AG04450 (cell line): ENCODE measurements at regions of chr7 and their contacts with region 1.

Region 1: GRCh38 chr7:27921081-27921836 is 181.3 kb downstream of the TAX1BP1 start:
- DNase-seq: peak; percentile 76
- H3K4me3 ChIP-seq: no peak overlapping the region
- H3K27ac ChIP-seq: no peak overlapping the region
- H3K27me3 ChIP-seq: no peaks in the 10 kb centered on the region
- CTCF ChIP-seq: peak; percentile 60

Region 2: DNA sequence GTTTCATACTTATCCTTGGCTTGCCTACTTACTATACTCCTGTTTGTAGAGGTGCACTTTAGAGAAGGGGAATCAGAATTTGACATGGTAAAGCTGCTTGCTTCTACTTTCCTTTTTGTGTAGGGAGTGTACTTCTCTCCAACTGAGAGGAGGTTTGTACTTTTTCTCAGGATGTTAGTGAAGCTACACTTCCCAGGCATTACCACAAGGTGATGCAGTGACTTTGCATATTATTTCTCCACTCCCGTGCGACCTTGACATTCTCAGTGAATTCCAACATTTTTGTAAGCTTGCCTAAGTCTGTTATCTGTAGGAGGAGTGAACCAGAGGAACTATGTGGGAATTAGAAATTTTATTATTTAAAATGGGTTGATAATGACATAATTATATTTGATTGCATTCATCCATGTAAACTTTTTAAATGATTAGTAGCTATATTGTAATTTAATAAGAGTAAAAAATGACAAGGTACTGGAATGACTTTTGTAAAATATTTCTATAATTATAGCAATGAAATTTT is 176.1 kb before region 1 on chr7:
- CTCF ChIA-PET with region 1: interaction called, 19 read pairs
- POLR2A ChIA-PET with region 1: no interaction called
- DNase-seq: peak; percentile 51
- H3K4me3 ChIP-seq: peak overlapping the region; percentile 21; the same call in 1 of the 2 replicates
- H3K27ac ChIP-seq: peak overlapping the region; percentile 79
- H3K27me3 ChIP-seq: no peaks in the 10 kb centered on the region
- CTCF ChIP-seq: peak; percentile 80

Region 3: GRCh38 chr7:27941522-27941921 is 20.3 kb after region 1 on chr7:
- CTCF ChIA-PET with region 1: no interaction called
- POLR2A ChIA-PET with region 1: no interaction called
- DNase-seq: no peak
- H3K4me3 ChIP-seq: no peak overlapping the region
- H3K27ac ChIP-seq: no peak overlapping the region
- H3K27me3 ChIP-seq: no peaks in the 10 kb centered on the region
- CTCF ChIP-seq: no peak